ENCODE measurements at regions of chr3 and their contacts with region 1.

Region 1: GRCh38 chr3:51371943-51372557 is 13.0 kb upstream of the MANF start:
- DNase-seq: peak; percentile 85
- H3K4me3 ChIP-seq: no peak overlapping the region
- H3K27ac ChIP-seq: no peak overlapping the region
- H3K4me1 ChIP-seq: no peaks in the 10 kb centered on the region
- H3K27me3 ChIP-seq: no peaks in the 10 kb centered on the region

Region 2: DNA sequence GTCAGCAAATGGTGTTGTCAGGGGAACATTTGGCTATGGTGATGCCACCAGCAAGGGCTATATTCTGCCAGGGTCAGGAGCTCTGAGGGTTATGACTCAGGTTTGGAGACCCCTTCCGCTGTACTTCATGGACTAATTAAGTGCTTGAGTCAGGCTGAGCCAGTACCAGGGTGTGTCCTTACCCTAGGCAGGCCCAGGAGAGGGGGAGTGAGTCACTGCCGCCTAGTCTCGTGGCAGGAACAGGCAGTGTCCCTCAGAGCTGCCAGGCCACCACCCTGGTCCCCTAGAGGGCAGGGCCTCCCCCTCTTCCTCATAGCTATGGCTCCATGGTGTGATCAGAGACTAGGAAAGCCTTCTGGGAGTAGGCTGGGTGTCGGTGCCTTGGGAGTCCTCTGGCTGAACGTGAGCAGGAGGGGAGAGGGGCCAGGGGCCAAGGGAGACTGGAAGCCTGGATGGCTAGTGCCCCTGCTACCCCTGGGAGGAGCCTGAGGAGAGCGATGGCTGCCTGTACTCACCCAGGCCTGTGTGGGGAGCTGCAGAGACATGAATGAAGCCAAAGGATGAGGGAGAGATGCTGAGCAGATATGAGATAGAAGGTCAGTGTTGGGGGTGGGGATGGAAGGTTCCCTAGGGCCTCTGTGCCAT is 744.5 kb before region 1 on chr3:
- in situ Hi-C with region 1: loop called (anchors 10 kb)
- DNase-seq: peak; percentile 92
- H3K4me3 ChIP-seq: no peak overlapping the region
- H3K27ac ChIP-seq: peak overlapping the region; percentile 81
- H3K4me1 ChIP-seq: peaks cover 60% of the 10 kb centered on the region
- H3K27me3 ChIP-seq: no peaks in the 10 kb centered on the region

Region 3: DNA sequence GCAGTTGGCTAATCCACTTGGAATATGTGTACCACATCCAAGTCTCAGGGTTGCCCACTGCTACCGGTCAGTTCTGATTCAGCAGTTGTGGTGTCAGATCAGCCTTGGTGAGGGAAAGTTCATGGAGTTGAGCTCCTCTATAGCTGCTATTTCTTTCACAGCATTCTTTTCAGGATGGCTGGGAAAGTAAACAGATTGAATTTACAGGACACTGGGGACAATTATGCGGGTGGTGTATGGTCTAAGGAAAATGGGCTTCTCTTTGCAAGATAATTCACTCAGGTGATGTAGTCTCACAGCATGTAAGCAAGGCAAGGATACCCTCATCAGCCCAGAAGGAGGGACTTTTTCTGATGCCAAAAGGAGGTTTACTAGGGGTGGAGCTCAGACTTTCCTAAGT is 447.4 kb before region 1 on chr3:
- in situ Hi-C with region 1: no loop called
- DNase-seq: no peak
- H3K4me3 ChIP-seq: no peak overlapping the region
- H3K27ac ChIP-seq: no peak overlapping the region
- H3K4me1 ChIP-seq: no peaks in the 10 kb centered on the region
- H3K27me3 ChIP-seq: no peaks in the 10 kb centered on the region

Region 4: DNA sequence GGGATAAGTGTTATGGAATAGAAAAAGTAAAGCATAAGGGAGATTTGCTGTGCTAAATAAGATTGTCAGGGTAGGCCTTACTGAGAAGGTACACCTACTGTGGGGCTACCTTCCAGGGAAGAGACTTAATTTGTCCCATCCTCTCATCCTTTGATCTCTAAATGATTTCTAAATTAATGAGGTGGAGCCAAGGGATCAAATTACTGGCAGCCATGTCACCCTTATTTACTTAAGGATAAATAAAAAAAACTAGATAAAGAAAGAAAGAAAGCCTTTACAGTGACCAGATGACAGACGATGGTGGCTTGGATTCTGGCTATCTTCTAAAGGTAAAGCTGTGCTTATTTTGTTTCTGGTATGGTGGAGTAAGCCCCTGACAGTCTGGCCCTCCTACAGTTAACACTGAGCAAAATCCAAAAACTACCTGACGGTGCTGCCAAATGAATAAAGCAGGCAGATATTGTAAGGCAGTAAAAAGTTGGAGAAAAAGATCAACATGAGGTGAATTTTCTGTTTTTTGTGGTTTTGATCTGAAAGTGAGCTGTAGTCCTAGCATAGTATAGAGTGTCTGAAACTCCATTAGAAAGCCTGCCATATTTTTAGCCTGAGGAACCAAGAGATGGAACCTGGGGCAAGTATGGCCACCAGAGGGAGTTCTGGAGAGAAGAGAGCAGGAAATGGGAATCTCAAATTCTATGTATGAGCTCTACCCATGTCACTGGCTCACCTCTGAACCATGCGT is 272.1 kb before region 1 on chr3:
- in situ Hi-C with region 1: loop called (anchors 5 kb)
- DNase-seq: peak; percentile 81
- H3K4me3 ChIP-seq: no peak overlapping the region
- H3K27ac ChIP-seq: no peak overlapping the region
- H3K4me1 ChIP-seq: no peaks in the 10 kb centered on the region
- H3K27me3 ChIP-seq: no peaks in the 10 kb centered on the region

Region 5: DNA sequence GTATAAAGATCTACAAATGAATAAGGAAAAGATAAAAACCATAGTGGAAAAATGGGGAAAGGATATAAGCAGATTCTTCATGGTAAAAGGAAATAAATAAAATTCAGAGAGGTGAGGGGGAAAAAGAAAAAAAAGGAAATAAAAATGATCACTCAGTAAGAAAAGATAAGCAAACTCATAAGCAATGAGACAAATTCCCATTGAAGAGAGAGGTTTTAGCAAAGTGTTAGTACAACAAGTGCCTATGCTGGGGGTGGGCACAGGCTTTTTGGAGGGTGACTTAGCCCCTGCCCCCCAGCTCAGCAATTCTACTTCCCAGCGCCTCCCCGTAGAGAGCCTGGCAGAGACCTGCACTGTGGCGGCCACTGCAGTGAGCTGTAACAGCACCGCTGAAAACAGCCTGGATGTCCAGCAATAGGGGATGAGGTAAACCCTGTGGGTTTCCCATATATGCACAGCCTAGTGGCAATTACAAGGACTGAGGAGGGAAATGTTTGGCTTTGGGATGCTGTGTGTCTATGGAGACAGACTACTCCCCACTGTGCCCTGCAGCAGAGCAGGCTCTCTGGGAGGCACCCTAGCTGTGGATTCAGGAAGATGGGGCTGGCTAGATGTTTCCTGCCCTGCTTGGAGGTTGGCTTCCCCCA is 1697.5 kb after region 1 on chr3:
- in situ Hi-C with region 1: no loop called
- DNase-seq: peak; percentile 25
- H3K4me3 ChIP-seq: no peak overlapping the region
- H3K27ac ChIP-seq: no peak overlapping the region
- H3K4me1 ChIP-seq: peaks cover 3% of the 10 kb centered on the region; the same call in 1 of the 2 replicates
- H3K27me3 ChIP-seq: no peaks in the 10 kb centered on the region; the same call in 1 of the 2 replicates

Measured in GM23248 (cell line).